ENCODE measurements at regions of chr3 and their contacts with region 1.

Region 1: DNA sequence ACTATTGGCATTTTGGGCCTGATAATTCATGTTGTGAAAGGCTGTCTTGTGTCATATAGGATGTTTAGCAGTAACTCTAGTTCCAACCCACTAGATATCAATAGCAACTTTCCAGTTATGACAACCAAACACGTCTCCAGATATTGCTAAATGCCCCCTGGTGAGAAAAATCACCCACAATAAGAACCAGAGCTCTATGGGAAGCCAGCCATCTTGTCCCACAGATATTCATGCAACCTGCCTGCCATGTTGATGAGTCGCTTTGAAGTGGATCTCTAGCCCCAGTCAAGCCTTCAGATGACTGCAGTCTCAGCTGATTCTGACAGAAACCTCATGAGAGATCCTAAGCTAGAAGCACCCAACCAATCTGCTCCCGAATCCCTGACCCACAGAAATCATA is 5.6 kb upstream of the TNIK start:
- DNase-seq: no peak
- H3K4me3 ChIP-seq: no peak overlapping the region
- H3K27ac ChIP-seq: no peak overlapping the region
- H3K4me1 ChIP-seq: peaks cover 0 to 13% (median 5%) of the 10 kb centered on the region in 4 donors
- H3K27me3 ChIP-seq: no peaks in the 10 kb centered on the region
- CTCF ChIP-seq: no peak
- EP300 ChIP-seq: no peak
- POLR2A ChIP-seq: no peak

Region 2: DNA sequence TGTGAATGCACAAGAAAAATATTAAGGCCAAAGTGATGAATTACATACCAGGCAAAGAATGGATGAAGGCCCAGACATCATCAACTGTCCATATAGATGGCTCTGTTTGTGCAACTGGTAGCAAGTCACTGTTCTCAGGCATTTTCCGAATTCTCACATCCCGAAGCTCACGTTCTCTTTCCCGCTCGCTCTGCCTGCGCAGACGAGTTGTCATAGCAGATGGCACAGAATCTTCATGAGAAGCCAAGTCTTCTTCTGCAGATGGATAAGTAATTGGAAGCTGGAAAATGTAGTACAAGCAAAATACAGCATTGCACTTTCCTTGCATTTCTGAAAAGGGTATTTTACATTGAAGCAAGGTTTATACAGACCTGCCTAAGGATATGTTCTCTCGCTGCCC is 1363.3 kb before region 1 on chr3:
- in situ Hi-C with region 1: no loop called
- intact Hi-C with region 1: loop called (anchors 5 kb)
- DNase-seq: no peak
- H3K4me3 ChIP-seq: no peak overlapping the region
- H3K27ac ChIP-seq: no peak overlapping the region
- H3K4me1 ChIP-seq: no peaks in the 10 kb centered on the region
- H3K27me3 ChIP-seq: no peaks in the 10 kb centered on the region
- CTCF ChIP-seq: no peak
- EP300 ChIP-seq: no peak
- POLR2A ChIP-seq: no peak

Region 3: DNA sequence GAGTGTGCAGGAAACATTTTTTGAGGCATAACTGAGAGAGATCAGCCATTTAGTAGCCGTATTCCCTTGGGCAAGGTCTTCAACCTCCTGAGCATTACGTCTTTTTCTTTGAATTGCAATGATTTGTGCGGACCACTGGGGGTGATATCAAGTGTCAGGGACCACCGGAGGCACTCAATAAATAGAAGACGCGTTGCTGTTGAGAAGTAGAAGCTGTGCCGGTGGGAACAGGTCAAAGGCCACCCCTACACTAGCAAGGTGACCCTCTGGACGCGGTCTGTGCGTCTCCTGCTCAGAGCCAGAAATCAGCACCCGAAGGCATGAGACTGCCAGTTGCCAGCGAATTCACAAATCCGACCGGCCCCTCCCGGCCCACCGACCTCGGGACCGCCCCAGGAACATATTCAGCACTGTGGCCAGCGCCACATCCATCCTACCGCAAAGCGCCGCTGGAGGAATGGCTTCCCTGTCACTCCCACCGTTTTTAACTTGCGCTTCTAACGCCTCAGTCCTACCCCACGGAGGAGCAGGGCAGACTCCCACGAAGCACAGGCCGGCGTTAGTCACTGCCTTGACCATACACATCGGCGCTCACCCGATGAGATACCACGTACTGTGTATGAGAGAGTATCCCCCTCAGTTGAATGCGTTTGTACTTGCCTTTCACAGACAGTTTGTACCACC is 983.8 kb after region 1 on chr3:
- in situ Hi-C with region 1: no loop called
- intact Hi-C with region 1: no loop called
- DNase-seq: no peak
- H3K4me3 ChIP-seq: no peak overlapping the region
- H3K27ac ChIP-seq: no peak overlapping the region
- H3K4me1 ChIP-seq: peaks cover 0 to 9% (median 0%) of the 10 kb centered on the region in 4 donors
- H3K27me3 ChIP-seq: peaks cover 75% of the 10 kb centered on the region
- CTCF ChIP-seq: no peak
- EP300 ChIP-seq: no peak
- POLR2A ChIP-seq: no peak